ENCODE measurements at regions of chr19 and their contacts with region 1.

Region 1: GRCh38 chr19:55624109-55625003 is at the start of gene ZNF784:
- DNase-seq: peak; percentile 83 to 94
- H3K4me3 ChIP-seq: peak within 1 kb of the TSS; percentile 62
- H3K27ac ChIP-seq: peak within 1 kb of the TSS; percentile 75
- H3K4me1 ChIP-seq: peaks cover 14% of the 10 kb centered on the region
- H3K27me3 ChIP-seq: no peaks in the 10 kb centered on the region
- CTCF ChIP-seq: no peak
- total RNA-seq, gene ZNF784: 5.4 and 7.7 TPM in 2 replicates

Region 2: GRCh38 chr19:55088543-55089341 is 535.6 kb before region 1 on chr19:
- CTCF ChIA-PET with region 1: interaction called, 16 read pairs
- POLR2A ChIA-PET with region 1: no interaction called
- intact Hi-C with region 1: no loop called
- DNase-seq: peak; percentile 35 to 86
- H3K4me3 ChIP-seq: no peak overlapping the region
- H3K27ac ChIP-seq: peak overlapping the region; percentile 18; the same call in 1 of the 2 replicates
- H3K4me1 ChIP-seq: no peaks in the 10 kb centered on the region
- H3K27me3 ChIP-seq: no peaks in the 10 kb centered on the region
- CTCF ChIP-seq: peak; percentile 86

Region 3: GRCh38 chr19:55279770-55280643 is 344.3 kb before region 1 on chr19 and contains the start of gene HSPBP1:
- CTCF ChIA-PET with region 1: no interaction called
- POLR2A ChIA-PET with region 1: interaction called, 16 read pairs
- intact Hi-C with region 1: no loop called
- DNase-seq: peak; percentile 94 to 100
- H3K4me3 ChIP-seq: peak within 1 kb of the TSS; percentile 94
- H3K27ac ChIP-seq: peak within 1 kb of the TSS; percentile 72
- H3K4me1 ChIP-seq: peaks cover 8% of the 10 kb centered on the region; the same call in 1 of the 2 replicates
- H3K27me3 ChIP-seq: peaks cover 4% of the 10 kb centered on the region; the same call in 1 of the 2 replicates
- CTCF ChIP-seq: no peak
- total RNA-seq, gene HSPBP1: 66.2 and 79.6 TPM in 2 replicates

Region 4: GRCh38 chr19:55426042-55426441 is 198.3 kb before region 1 on chr19:
- CTCF ChIA-PET with region 1: no interaction called
- POLR2A ChIA-PET with region 1: no interaction called
- intact Hi-C with region 1: no loop called
- DNase-seq: no peak
- H3K4me3 ChIP-seq: no peak overlapping the region
- H3K27ac ChIP-seq: no peak overlapping the region
- H3K4me1 ChIP-seq: no peaks in the 10 kb centered on the region
- H3K27me3 ChIP-seq: peaks cover 87% of the 10 kb centered on the region
- CTCF ChIP-seq: no peak

Region 5: GRCh38 chr19:55516878-55517620 is 107.3 kb before region 1 on chr19:
- CTCF ChIA-PET with region 1: no interaction called
- POLR2A ChIA-PET with region 1: interaction called, 13 read pairs
- intact Hi-C with region 1: loop called (anchors 1 kb)
- DNase-seq: peak; percentile 83 to 97
- H3K4me3 ChIP-seq: peak overlapping the region; percentile 60; the same call in 1 of the 2 replicates
- H3K27ac ChIP-seq: no peak overlapping the region
- H3K4me1 ChIP-seq: no peaks in the 10 kb centered on the region
- H3K27me3 ChIP-seq: peaks cover 17% of the 10 kb centered on the region
- CTCF ChIP-seq: peak; percentile 94

Region 6: GRCh38 chr19:55605207-55605636 is 19.1 kb before region 1 on chr19:
- CTCF ChIA-PET with region 1: interaction called, 14 read pairs
- POLR2A ChIA-PET with region 1: interaction called, 14 read pairs
- intact Hi-C with region 1: loop called (anchors 1 kb)
- DNase-seq: peak; percentile 93 to 100
- H3K4me3 ChIP-seq: peak overlapping the region; percentile 79
- H3K27ac ChIP-seq: peak overlapping the region; percentile 66
- H3K4me1 ChIP-seq: peaks cover 29% of the 10 kb centered on the region
- H3K27me3 ChIP-seq: no peaks in the 10 kb centered on the region
- CTCF ChIP-seq: no peak